Motor neuron (in vitro differentiated cells): ENCODE measurements at regions of chr20 and their contacts with region 1.

Region 1: DNA sequence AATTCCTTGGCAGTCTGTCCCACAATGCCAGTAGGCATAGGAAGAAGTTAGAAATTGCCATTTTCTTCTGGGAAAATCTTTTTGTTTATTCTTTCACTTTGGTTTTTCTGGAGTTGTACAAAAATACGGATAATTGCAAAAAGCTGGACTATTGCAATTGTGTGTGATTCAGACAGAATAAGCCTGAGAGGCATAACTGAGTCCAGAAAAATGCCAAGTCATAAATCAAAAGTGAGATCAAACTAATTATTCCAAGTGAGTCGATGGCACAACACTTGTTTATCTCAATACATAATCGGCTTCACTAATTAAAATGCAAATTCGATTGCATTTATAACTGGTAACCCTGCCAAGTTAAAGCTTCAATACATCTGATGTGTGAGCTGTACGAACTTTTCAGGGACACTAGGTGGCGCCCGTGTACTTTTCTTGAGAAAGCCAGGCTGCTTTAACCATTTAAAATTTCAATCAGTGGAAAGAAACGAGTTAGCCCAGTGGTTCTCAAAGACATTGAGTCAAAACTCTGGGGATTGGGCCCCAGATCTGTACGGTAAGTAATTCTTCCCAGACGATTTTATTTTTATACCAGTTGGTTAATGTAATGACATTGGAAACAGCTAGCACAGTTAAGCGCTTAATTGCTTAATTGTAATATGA is 102.6 kb downstream of the LAMP5 start:
- ATAC-seq: peak; percentile 53 to 80 (median 62)
- H3K4me3 ChIP-seq: no peak overlapping the region
- H3K27ac ChIP-seq: no peak overlapping the region
- H3K4me1 ChIP-seq: no peaks in the 10 kb centered on the region

Region 2: DNA sequence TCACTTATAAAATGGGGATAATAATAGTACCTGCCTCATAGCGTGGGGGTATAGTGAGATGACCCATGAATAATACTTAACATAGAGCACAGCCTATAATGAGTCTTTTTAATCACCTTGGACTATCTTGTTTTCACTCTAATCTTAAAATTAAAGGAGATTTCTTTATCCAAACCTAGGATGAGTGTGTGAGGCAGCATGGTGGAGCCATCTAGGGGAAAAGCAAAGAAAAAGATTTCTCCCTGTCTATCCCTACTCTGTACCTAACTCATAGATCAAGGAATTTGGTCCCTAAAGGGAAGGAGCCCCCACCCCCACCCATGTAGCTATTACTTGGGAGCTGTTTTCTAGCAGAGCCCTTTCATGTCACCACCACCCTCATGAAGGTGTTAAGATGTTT is 267.1 kb after region 1 on chr20:
- in situ Hi-C with region 1: loop called in 3 of 9 experiments (anchors 25 kb)
- ATAC-seq: peak in 3 of 8 experiments; percentile 80 to 93 (median 85)
- H3K4me3 ChIP-seq: no peak overlapping the region
- H3K27ac ChIP-seq: no peak overlapping the region
- H3K4me1 ChIP-seq: no peaks in the 10 kb centered on the region

Region 3: DNA sequence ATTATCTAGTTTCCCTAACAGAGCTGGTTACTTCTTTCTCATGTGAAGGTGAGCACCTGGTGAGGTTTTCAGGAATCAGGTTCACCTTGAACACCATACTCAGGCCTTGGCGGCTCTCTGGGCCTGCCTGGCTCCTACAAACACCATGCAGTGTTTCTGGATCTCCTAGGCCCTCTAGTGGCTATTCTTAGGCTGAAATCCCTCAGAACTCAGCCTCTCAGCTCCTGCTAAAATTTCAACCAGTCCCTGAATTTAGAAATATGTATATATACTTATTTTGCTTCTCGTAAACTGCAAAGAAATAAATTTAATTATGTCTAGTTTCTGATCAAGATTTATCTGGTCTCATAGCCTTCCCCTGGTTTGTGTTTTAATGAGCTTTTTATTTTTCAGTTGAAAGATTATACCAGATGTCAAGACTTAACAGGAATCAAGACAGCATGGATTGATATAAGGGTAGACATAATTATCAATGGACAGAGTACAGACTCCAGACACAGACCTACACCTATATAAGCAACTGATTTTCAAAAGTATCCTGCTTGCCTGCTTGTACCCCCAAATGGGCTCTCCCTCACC is 473.7 kb after region 1 on chr20:
- in situ Hi-C with region 1: loop called in 2 of 9 experiments (anchors 10 to 25 kb)
- ATAC-seq: peak; percentile 64 to 94 (median 82)
- H3K4me3 ChIP-seq: no peak overlapping the region
- H3K27ac ChIP-seq: no peak overlapping the region
- H3K4me1 ChIP-seq: peaks cover 0 to 2% of the 10 kb centered on the region in 2 donors

Region 4: GRCh38 chr20:10434467-10434831 is 817.5 kb after region 1 on chr20:
- in situ Hi-C with region 1: loop called in 1 of 9 experiments (anchors 25 kb)
- ATAC-seq: peak; percentile 71 to 81 (median 80)
- H3K4me3 ChIP-seq: peak overlapping the region; percentile 58 to 91 (median 80)
- H3K27ac ChIP-seq: peak overlapping the region; percentile 38 to 88
- H3K4me1 ChIP-seq: peaks cover 5 to 10% of the 10 kb centered on the region in 2 donors